ENCODE measurements at regions of chr1 and their contacts with region 1.

Region 1: DNA sequence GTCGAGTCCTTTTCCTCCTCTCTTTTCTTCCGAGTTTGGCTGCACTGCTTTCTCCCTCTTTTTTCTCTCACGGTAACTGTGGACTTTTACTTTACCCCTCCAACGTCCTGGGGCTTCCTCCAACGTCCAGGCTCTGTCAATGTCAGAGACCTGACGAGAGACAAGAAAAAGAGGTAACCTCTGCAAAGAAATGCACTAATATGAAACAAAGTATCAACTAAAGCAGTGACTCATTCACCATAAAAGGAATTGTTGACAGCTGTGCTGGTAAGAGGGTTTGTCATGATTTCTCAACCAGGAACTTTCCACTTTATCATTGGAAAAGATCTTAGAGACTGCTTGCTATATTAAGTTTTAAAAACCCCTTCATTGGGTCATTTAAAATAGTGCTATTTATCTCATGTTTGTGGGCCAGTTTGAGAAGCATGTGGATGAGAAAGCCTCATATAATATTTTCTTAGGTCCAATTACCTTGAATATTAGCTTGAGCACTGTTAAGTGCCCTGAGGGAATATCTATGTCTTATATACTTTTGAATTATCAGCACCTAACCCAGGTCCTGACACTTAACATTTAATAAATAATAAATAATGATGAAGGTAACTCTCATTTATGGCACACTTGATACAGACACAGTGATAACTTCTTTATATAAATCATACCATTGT is at the start of gene GBP2:
- DNase-seq: no peak
- H3K4me3 ChIP-seq: peak within 1 kb of the TSS; percentile 61 to 64
- H3K27ac ChIP-seq: peak within 1 kb of the TSS; percentile 92
- H3K4me1 ChIP-seq: peaks cover 61% of the 10 kb centered on the region
- H3K27me3 ChIP-seq: no peaks in the 10 kb centered on the region
- CTCF ChIP-seq: no peak
- POLR2A ChIP-seq: peak in 1 of 2 donors; percentile 76
- total RNA-seq, gene GBP2: 59.4 TPM

Region 2: GRCh38 chr1:88763649-88764406 is 362.2 kb before region 1 on chr1:
- intact Hi-C with region 1: no loop called
- DNase-seq: no peak
- H3K4me3 ChIP-seq: no peak overlapping the region
- H3K27ac ChIP-seq: no peak overlapping the region
- H3K4me1 ChIP-seq: peaks cover 6% of the 10 kb centered on the region
- H3K27me3 ChIP-seq: no peaks in the 10 kb centered on the region
- CTCF ChIP-seq: no peak
- POLR2A ChIP-seq: no peak

Region 3: DNA sequence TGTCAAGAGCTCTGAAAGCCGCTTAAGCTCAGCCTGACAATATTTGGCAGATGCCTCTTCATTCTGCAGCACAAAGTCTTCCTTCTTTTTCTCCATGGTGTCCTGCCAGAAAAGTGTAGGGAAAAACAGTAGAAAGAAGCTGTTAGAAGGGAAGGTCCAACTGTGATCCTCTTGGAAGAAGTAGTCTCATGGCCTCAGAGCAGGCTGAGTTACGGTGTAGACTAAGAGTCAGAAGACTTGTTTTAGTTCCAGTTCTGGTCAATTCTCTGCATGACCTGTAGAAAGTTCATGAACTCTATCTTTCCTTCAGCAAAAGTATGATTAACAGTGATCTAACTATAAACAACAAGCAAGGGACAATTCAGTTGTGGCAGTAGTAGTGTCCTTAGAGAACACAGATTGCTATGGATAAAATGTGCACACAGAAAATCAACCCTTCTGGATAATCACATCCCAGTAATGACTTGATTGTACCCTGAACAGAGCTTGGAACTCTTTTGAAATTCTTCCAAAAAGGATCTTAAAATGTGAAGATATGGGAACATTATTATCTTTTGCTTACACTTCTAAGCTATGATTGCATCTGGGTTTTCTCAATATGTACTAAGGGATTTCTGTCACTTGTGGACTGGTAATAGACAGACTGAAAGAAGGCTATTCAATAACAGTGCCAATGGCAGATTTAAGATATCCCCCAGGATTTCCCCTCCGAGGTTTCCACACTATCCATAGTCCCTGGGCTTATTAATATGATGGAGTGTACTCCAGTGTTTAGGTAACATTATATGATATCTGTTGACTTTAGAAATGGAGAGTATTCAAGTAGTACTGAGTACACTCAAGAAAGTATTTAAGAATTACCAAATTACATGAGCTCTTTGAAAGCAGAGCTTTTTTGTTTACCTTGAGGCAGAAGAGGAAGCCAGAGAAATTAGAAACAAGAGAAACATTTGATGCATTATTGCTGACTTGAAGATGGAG is 21.9 kb after region 1 on chr1:
- intact Hi-C with region 1: loop called (anchors 1 kb)
- DNase-seq: no peak
- H3K4me3 ChIP-seq: no peak overlapping the region
- H3K27ac ChIP-seq: no peak overlapping the region
- H3K4me1 ChIP-seq: no peaks in the 10 kb centered on the region
- H3K27me3 ChIP-seq: no peaks in the 10 kb centered on the region
- CTCF ChIP-seq: no peak
- POLR2A ChIP-seq: no peak

Region 4: GRCh38 chr1:89243046-89243445 is 117.0 kb after region 1 on chr1:
- intact Hi-C with region 1: no loop called
- DNase-seq: no peak
- H3K4me3 ChIP-seq: no peak overlapping the region
- H3K27ac ChIP-seq: no peak overlapping the region
- H3K4me1 ChIP-seq: no peaks in the 10 kb centered on the region
- H3K27me3 ChIP-seq: no peaks in the 10 kb centered on the region
- CTCF ChIP-seq: no peak
- POLR2A ChIP-seq: no peak

Measured in vagina (tissue), 2 donors.